WTC11 (cell line): ENCODE measurements at regions of chr10 and their contacts with region 1.

Region 1: GRCh38 chr10:124106241-124106879 is 13.0 kb upstream of the CHST15 start:
- DNase-seq: no peak
- ATAC-seq: no peak
- H3K4me3 Mint-ChIP-seq: no peak overlapping the region
- H3K27ac Mint-ChIP-seq: no peak overlapping the region
- H3K4me1 Mint-ChIP-seq: peaks cover 10% of the 10 kb centered on the region
- H3K27me3 Mint-ChIP-seq: no peaks in the 10 kb centered on the region; the same call in 1 of the 2 replicates
- CTCF ChIP-seq: no peak

Region 2: GRCh38 chr10:124063750-124064603 is 42.4 kb before region 1 on chr10:
- CTCF ChIA-PET with region 1: no interaction called
- POLR2A ChIA-PET with region 1: no interaction called
- DNase-seq: no peak
- ATAC-seq: no peak
- H3K4me3 Mint-ChIP-seq: no peak overlapping the region
- H3K27ac Mint-ChIP-seq: no peak overlapping the region; the same call in 1 of the 2 replicates
- H3K4me1 Mint-ChIP-seq: peaks cover 42% of the 10 kb centered on the region
- H3K27me3 Mint-ChIP-seq: no peaks in the 10 kb centered on the region
- CTCF ChIP-seq: no peak

Region 3: DNA sequence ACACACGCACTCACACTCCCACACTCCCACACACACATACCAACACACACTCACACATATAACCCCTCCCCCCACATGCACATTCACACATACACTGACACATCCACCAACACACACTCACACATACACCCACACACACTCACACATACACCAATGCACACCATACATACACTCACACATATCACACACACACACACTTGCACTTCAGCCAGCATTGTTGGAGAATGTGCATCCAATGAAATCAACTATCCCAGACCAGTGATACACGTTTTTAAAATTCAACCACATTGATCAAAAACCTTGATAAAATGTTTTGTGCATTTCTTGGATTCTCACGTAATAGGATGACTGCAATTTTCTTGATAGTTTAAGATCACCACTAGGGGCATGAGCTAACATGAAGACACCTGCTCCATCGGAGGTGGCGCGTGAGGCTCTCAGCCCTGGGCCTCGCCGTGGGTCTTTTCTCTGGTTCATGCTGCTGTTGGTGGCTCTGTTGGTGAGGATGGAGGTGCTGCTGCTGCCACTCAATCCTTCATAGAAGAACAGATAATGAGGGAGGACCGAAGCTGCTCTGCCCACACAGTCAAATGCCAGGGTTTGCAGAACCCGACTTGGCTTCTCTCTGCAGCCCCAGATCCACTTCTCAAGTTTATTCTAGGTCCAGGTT is 19.2 kb after region 1 on chr10:
- CTCF ChIA-PET with region 1: interaction called, 14 read pairs
- POLR2A ChIA-PET with region 1: no interaction called
- DNase-seq: peak; percentile 35
- ATAC-seq: peak; percentile 68
- H3K4me3 Mint-ChIP-seq: no peak overlapping the region
- H3K27ac Mint-ChIP-seq: no peak overlapping the region
- H3K4me1 Mint-ChIP-seq: peaks cover 3% of the 10 kb centered on the region; the same call in 1 of the 2 replicates
- H3K27me3 Mint-ChIP-seq: peaks cover 6% of the 10 kb centered on the region
- CTCF ChIP-seq: peak; percentile 19; the same call in 1 of the 2 replicates